Adrenal gland (tissue), 19 donors: ENCODE measurements at regions of chr19 and their contacts with region 1.

Region 1: GRCh38 chr19:44723952-44724319 is 24.6 kb upstream of the BCL3 start:
- DNase-seq: peak; percentile 84 to 93 (median 90)
- H3K4me3 ChIP-seq: no peak overlapping the region
- H3K27ac ChIP-seq: no peak overlapping the region
- H3K4me1 ChIP-seq: peaks cover 12 to 37% of the 10 kb centered on the region in 2 donors
- H3K27me3 ChIP-seq: no peaks in the 10 kb centered on the region
- CTCF ChIP-seq: peak; percentile 92 to 99 (median 98)
- POLR2A ChIP-seq: no peak

Region 2: GRCh38 chr19:44689056-44689895 is 34.7 kb before region 1 on chr19:
- intact Hi-C with region 1: loop called in 1 of 2 experiments (anchors 5 kb)
- DNase-seq: peak; percentile 73 to 88 (median 83)
- H3K4me3 ChIP-seq: no peak overlapping the region
- H3K27ac ChIP-seq: peak overlapping the region in 1 of 5 donors; percentile 31
- H3K4me1 ChIP-seq: peaks cover 30 to 40% of the 10 kb centered on the region in 2 donors
- H3K27me3 ChIP-seq: no peaks in the 10 kb centered on the region
- CTCF ChIP-seq: peak; percentile 76 to 95 (median 94)
- POLR2A ChIP-seq: no peak

Region 3: DNA sequence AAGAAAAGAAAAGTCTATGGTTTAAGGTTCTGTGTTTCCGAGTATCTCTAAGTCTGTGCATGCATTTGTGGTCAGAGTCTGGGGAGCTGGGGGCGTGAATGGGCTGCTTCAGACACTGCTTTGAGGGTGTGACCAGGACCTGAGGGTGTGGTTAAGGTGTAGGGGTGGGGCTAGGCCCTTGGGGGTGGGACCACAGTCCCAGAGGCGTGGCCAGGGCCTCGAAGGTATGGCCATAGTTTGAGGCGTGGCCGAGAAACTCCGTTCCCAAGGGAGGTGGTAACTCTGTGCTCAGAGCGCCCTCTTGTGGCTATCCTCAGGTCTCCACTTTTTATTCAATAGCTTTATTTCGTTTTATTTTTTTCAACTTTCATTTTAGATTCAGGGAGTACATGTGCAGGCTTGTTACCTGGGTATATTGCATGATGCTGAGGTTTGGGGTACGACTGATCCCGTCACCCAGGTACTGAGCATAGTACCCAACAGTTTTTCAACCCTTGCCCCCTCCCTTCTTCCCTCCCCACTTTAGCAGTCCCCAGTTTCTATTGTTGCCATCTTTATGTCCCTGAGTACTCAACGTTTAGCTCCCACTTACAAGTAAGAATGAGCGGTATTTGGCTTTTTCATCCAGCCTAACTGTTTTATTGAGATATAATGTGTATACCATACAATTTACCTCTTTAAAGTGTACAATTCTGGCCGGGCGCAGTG is 46.8 kb after region 1 on chr19:
- intact Hi-C with region 1: loop called (anchors 2 kb)
- DNase-seq: peak; percentile 94 to 98 (median 96)
- H3K4me3 ChIP-seq: no peak overlapping the region
- H3K27ac ChIP-seq: no peak overlapping the region
- H3K4me1 ChIP-seq: peaks cover 6 to 7% of the 10 kb centered on the region in 2 donors
- H3K27me3 ChIP-seq: no peaks in the 10 kb centered on the region
- CTCF ChIP-seq: peak; percentile 89 to 95 (median 92)
- POLR2A ChIP-seq: no peak

Region 4: GRCh38 chr19:44845612-44846454 is 121.9 kb after region 1 on chr19 and contains the start of gene NECTIN2:
- intact Hi-C with region 1: loop called in 1 of 2 experiments (anchors 5 kb)
- DNase-seq: peak; percentile 100
- H3K4me3 ChIP-seq: peak within 1 kb of the TSS; percentile 33 to 97 (median 84)
- H3K27ac ChIP-seq: peak within 1 kb of the TSS; percentile 49 to 99 (median 98)
- H3K4me1 ChIP-seq: peaks cover 36 to 45% of the 10 kb centered on the region in 2 donors
- H3K27me3 ChIP-seq: no peaks in the 10 kb centered on the region
- CTCF ChIP-seq: peak; percentile 58 to 93 (median 82)
- POLR2A ChIP-seq: peak; percentile 94 to 95
- total RNA-seq, gene NECTIN2: 97.7 to 243 (median 131) TPM